ENCODE measurements at regions of chr6 and their contacts with region 1.

Region 1: DNA sequence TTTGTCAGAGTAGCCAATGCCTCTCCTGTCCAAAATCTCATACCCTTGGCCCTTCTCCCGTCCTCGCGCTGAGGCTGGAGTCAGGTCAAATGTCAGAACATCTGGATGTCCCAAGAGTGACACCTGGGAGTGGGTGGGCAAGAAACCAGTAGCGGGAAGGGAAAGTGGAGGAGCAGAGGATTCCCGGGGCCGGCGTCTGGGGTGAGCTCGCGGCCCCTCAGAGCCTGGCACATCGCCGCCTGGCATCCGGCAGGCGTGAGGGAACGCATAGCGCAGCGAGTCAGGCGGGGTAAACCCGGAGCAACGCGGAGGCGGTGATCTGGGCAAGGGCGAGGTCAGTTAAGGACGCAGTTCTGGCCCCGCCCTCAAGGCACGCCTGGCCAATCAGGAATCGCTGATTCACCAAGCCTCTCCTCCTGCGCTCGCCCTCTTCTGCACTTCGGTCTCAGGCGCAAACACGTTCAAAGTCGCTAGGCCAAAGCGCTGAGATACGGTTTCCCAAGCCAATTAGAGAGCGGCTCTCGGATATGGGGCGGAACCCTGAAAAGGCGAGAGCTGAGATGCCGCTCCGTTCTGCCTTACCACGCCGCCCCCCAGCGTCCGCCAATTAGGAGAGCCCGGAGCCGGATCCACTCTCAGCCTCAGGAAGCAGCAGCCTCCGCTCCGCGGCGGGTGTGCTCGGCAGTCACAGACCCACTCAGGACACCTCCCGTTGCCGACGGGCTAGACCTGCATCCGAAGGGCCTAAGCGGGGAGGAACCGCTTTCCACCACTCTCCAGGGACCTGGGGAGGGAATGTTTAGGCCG is 22.5 kb downstream of the VPS52 start:
- DNase-seq: peak; percentile 97 to 99 (median 98)
- ATAC-seq: peak; percentile 96 to 97 (median 96)
- H3K4me3 ChIP-seq: peak overlapping the region; percentile 27 to 70 (median 64)
- H3K27ac ChIP-seq: peak overlapping the region; percentile 70 to 98 (median 92)
- H3K4me1 ChIP-seq: peaks cover 0 to 31% (median 20%) of the 10 kb centered on the region in 12 donors
- H3K27me3 ChIP-seq: no peaks in the 10 kb centered on the region
- CTCF ChIP-seq: peak in 7 of 12 donors; percentile 17 to 59 (median 30)
- POLR2A ChIP-seq: peak in 1 of 2 donors; percentile 80

Region 2: DNA sequence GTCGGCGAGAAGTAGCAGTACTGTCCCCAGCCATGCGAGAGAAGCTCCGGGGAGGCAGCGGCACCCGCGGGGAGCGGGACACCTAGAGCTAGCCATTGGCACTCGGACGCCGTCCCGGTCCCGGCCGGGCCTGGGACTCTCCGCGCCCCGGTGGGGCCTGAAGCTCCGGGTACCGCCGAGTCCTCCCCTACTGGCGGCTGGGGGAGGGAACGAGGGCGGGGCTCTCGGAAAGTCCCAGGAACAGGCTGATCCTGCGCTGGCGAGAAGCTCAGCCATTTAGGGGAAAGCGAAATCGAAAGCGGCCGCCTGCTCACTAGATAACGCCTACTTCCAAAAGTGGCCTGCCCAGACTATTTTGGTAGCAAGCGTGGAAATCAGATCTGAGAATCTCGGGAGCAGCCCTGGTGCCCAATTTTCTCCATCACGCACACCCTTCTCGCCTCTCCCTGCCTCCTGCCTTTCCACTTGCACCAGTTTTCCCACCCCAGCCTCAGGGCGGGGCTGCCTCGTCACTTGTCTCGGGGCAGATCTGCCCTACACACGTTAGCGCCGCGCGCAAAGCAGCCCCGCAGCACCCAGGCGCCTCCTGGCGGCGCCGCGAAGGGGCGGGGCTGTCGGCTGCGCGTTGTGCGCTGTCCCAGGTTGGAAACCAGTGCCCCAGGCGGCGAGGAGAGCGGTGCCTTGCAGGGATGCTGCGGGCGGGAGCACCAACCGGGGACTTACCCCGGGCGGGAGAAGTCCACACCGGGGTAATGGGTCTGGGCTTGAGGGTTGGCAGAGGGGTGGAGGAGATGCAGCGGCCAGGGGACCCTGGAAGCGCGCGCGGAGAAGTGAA is 395.4 kb before region 1 on chr6 and contains the starts of genes PSMB9 and TAP1:
- intact Hi-C with region 1: no loop called
- DNase-seq: peak; percentile 96 to 97 (median 97)
- ATAC-seq: peak; percentile 95 to 96 (median 96)
- H3K4me3 ChIP-seq: peak within 1 kb of the TSS; percentile 69 to 99 (median 90)
- H3K27ac ChIP-seq: peak within 1 kb of the TSS; percentile 90 to 100 (median 99)
- H3K4me1 ChIP-seq: peaks cover 0 to 77% (median 24%) of the 10 kb centered on the region in 12 donors
- H3K27me3 ChIP-seq: no peaks in the 10 kb centered on the region
- CTCF ChIP-seq: peak; percentile 59 to 92 (median 86)
- POLR2A ChIP-seq: peak; percentile 63 to 93
- total RNA-seq, gene PSMB9: 8.9 to 182 (median 14.6) TPM
- total RNA-seq, gene TAP1: 15.1 to 207 (median 20.3) TPM

Region 3: DNA sequence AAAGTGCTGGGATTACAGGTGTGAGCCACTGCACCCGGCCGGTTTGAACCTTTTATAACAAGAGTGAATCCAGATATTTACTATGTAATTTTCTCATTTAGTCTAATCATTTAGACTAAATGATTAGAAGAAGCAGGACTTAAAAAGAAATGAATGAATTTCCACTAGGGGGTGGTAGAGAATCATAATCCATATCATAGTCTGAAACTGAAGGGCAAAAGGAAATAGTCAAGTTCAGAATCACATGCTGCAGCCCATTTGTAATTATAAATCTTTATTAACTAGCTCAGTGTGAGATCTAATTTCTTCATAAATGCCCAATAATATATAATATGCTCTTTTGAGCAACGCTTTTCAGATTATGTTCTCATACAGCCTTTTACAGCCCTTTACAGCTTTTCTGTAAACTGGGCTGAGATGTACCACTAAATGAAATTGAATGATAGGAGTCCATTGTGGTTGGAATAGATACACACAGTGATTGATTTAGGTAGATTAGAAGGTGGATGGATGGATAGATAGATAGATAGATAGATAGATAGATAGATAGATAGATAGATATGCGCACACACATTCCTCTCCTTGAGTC is 363.3 kb before region 1 on chr6:
- intact Hi-C with region 1: loop called in 2 of 10 experiments (anchors 2 to 5 kb)
- DNase-seq: no peak
- ATAC-seq: peak; percentile 44 to 63 (median 52)
- H3K4me3 ChIP-seq: no peak overlapping the region
- H3K27ac ChIP-seq: peak overlapping the region in 1 of 12 donors; percentile 60
- H3K4me1 ChIP-seq: peaks cover 0 to 23% (median 0%) of the 10 kb centered on the region in 12 donors
- H3K27me3 ChIP-seq: no peaks in the 10 kb centered on the region
- CTCF ChIP-seq: peak; percentile 53 to 79 (median 68)
- POLR2A ChIP-seq: no peak

Region 4: DNA sequence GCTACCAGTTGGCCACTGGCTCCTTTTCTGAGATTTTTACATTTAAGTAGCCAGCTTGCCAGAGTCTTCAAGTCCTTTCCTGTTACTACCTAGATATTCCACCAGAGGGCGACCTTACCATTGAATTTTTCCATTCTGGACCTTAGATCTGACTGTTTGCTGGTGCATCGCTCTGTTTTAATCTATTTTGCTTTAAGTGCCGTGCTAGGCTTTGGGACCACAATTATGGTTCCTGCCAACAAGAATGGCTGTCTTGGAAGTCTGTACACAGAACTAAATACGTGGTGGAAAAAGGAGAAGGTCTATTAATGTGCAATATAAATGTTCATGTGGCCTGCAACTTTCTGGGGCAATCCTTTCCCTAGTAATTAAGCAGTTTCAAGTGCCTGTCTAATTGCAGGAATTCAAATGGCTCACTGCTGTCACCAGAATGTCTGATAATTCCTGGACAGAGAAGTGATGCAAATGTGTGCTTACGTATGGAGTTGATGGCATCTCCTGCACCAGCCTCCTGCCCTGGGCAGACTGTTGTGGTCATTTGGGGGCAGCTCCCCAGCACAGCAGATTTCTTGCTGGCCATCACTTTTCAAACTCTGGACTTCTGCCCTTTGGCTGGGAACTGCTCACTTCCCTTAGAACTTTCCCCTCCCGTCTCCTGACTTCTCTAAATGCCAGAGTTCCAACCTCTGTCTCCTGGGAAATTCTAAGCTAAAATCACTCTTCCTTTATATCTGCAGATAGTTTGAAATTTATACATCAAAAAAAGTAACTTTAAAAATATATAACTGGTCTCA is 234.1 kb before region 1 on chr6:
- intact Hi-C with region 1: loop called (anchors 1 to 10 kb)
- DNase-seq: peak in 3 of 5 donors; percentile 23 to 62 (median 57)
- ATAC-seq: peak in 3 of 4 donors; percentile 55 to 66 (median 64)
- H3K4me3 ChIP-seq: peak overlapping the region in 2 of 12 donors; percentile 1 to 19
- H3K27ac ChIP-seq: peak overlapping the region in 11 of 12 donors; percentile 4 to 87 (median 44)
- H3K4me1 ChIP-seq: peaks cover 0 to 60% (median 27%) of the 10 kb centered on the region in 12 donors
- H3K27me3 ChIP-seq: peaks cover 0 to 22% (median 4%) of the 10 kb centered on the region in 9 donors
- CTCF ChIP-seq: peak; percentile 79 to 91 (median 83)
- POLR2A ChIP-seq: no peak

Region 5: GRCh38 chr6:33061987-33062386 is 187.1 kb before region 1 on chr6:
- intact Hi-C with region 1: no loop called
- DNase-seq: no peak
- ATAC-seq: no peak
- H3K4me3 ChIP-seq: no peak overlapping the region
- H3K27ac ChIP-seq: peak overlapping the region in 1 of 12 donors; percentile 27
- H3K4me1 ChIP-seq: peaks cover 0 to 22% (median 0%) of the 10 kb centered on the region in 12 donors
- H3K27me3 ChIP-seq: no peaks in the 10 kb centered on the region
- CTCF ChIP-seq: no peak
- POLR2A ChIP-seq: no peak

Region 6: DNA sequence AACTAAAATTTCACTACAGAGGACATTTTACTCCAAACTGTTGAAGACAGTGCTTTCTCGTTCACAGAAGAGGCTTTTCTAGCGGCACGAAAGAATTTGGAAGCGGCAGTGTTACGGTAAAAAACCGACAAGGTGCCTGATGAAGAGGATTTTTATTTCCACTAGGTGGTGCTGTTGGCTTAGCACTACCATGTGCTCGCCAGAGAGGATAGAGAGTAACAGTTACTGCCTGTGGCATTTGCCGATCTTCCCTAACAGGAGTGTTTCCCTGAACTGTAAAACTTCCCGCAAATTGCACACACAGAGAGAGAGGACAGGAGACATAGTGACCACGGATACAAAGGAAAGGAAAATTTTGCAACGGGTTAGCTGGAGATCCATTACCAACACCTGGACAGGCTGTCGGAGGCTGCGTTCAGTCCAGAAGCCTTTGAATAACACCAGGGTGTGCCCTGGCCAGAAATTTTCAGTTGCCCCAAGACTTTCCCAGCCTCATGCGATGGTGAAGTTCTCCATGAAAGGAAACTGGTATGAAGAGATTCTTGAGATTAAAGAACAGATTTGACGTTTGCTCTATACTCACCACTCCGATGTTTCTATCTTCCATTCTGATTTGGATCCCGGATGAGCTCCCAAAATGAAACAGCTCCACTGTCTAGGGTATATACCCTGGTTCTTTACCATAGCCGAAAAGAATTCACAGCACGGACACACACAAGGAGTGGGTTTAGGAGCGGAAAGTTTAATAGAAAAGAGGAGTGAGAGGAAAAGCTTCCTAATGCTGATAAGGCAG is 125.2 kb before region 1 on chr6:
- intact Hi-C with region 1: loop called in 9 of 10 experiments (anchors 2 to 5 kb)
- DNase-seq: no peak
- ATAC-seq: no peak
- H3K4me3 ChIP-seq: no peak overlapping the region
- H3K27ac ChIP-seq: no peak overlapping the region
- H3K4me1 ChIP-seq: no peaks in the 10 kb centered on the region
- H3K27me3 ChIP-seq: peaks cover 0 to 14% (median 0%) of the 10 kb centered on the region in 9 donors
- CTCF ChIP-seq: peak in 11 of 12 donors; percentile 6 to 58 (median 41)
- POLR2A ChIP-seq: no peak

Region 7: GRCh38 chr6:33200219-33201146 is 48.6 kb before region 1 on chr6 and contains the starts of genes RXRB and SLC39A7:
- intact Hi-C with region 1: loop called in 5 of 10 experiments (anchors 1 to 5 kb)
- DNase-seq: peak; percentile 99 to 100 (median 99)
- ATAC-seq: peak; percentile 86 to 92 (median 88)
- H3K4me3 ChIP-seq: peak within 1 kb of the TSS; percentile 59 to 98 (median 80)
- H3K27ac ChIP-seq: peak within 1 kb of the TSS; percentile 88 to 100 (median 98)
- H3K4me1 ChIP-seq: peaks cover 10 to 76% (median 54%) of the 10 kb centered on the region in 12 donors
- H3K27me3 ChIP-seq: no peaks in the 10 kb centered on the region
- CTCF ChIP-seq: no peak
- POLR2A ChIP-seq: peak in 1 of 2 donors; percentile 49
- total RNA-seq, gene RXRB: 20.7 to 39.6 (median 33.4) TPM
- total RNA-seq, gene SLC39A7: 42.4 to 70.4 (median 55.3) TPM

Region 8: GRCh38 chr6:33213166-33213988 is 35.8 kb before region 1 on chr6:
- intact Hi-C with region 1: loop called in 5 of 10 experiments (anchors 2 to 5 kb)
- DNase-seq: peak in 3 of 5 donors; percentile 46 to 70 (median 49)
- ATAC-seq: peak; percentile 21 to 65 (median 36)
- H3K4me3 ChIP-seq: peak overlapping the region; percentile 21 to 67 (median 56)
- H3K27ac ChIP-seq: peak overlapping the region in 8 of 12 donors; percentile 5 to 66 (median 38)
- H3K4me1 ChIP-seq: peaks cover 0 to 29% (median 17%) of the 10 kb centered on the region in 12 donors
- H3K27me3 ChIP-seq: peaks cover 0 to 5% (median 0%) of the 10 kb centered on the region in 9 donors
- CTCF ChIP-seq: no peak
- POLR2A ChIP-seq: no peak

Measured in heart left ventricle (tissue), 16 donors.